ENCODE measurements at regions of chr11 and their contacts with region 1.

Region 1: DNA sequence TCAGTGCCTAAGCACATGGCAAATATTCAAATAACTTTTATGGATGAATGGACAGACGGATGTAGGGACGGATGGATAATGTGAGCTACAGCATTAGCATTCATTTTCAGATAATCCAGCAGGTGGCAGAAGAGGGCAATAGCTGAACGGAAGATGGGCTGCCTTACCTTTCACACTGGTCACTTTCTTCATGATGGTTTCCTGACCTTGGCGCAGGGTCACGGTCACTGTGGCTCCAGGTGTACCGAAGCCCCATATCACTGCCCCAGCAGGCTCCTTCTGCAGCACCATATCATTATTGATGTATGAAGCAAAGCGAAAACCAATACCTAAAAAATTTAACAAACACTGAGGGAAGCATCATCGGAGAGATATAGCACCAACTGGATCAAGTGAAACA is 4.3 kb downstream of the SIAE start:
- DNase-seq: peak; percentile 68

Region 2: DNA sequence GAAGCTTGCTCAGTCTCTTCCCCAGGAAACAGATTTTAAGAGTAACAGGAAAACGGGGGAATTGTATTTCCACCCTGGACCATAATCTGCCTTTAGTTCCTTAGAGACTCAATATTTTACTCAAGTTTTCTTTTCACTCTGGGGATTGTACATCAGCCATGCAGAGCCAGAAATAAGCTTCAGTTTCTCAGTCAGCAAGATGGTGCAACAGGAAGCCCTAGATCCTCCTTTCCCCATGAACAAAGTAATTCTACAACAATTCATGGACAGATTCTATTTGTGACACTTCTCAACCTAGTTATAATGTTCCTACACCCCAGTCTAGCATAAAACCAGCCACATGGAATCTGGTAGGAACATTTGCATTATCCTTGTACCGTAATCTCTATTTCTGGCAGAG is 309.6 kb before region 1 on chr11:
- CTCF ChIA-PET with region 1: no interaction called
- POLR2A ChIA-PET with region 1: no interaction called
- DNase-seq: no peak

Region 3: DNA sequence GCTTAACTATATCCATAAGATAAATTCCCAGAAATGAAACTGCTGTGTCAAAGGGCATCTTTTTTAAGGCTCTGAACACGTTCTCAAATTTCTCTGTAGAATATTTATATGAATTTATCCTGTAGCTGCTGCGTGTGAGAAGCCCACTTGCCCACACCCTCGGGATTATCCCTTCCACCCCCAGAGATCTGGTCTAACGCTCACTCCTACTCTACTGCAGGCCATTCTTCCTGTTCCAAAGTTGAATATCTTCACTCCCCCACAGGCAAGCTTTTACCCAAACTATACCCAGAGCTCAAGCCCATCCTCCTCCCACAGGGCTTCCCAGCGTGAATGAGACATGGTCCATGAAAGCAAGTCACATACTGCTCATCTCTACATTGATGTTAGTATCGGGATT is 20.6 kb before region 1 on chr11:
- CTCF ChIA-PET with region 1: no interaction called
- POLR2A ChIA-PET with region 1: no interaction called
- DNase-seq: no peak

Region 4: GRCh38 chr11:124658986-124659385 is 10.2 kb before region 1 on chr11:
- CTCF ChIA-PET with region 1: interaction called, 10 read pairs
- POLR2A ChIA-PET with region 1: interaction called, 8 read pairs
- DNase-seq: no peak

Region 5: DNA sequence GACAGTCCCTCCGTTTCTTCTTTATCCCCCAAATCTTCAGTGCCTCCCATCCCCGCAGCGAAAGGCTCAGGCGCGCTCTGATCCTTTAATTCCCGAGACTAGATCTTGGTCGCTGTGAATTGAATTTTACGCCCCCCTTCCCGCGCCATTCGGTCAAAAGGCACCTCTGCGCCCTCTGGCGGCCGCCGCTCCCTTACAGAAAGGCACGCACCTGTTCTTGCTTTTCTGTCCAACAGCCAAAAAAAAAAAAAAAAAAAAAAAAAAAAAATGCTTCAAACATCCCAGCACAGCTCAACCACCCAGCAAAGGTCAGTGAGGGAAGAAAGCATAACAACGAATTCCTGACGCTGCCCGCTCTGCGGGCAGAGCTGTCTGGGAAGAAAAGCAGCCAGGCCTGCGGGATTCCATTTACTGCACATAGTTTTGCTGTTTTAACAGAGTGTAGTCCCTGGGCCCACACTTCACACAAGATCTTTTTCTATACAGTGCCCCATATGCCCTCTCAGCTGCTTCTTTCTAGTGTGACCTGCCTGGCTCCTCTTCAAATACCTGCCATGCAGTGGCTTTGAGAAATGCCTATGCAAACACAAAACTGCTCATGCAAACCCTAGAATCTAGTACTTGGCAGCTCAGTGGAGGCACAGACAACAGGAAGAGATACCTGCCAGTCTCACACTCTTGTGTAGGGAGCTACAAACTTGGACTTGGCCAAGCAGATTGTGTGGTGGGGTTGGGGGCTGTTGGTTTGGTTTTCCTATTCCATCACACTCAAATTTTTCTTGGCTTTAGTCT is 94.2 kb after region 1 on chr11:
- CTCF ChIA-PET with region 1: interaction called, 11 read pairs
- POLR2A ChIA-PET with region 1: interaction called, 4 read pairs
- DNase-seq: peak; percentile 78

Region 6: DNA sequence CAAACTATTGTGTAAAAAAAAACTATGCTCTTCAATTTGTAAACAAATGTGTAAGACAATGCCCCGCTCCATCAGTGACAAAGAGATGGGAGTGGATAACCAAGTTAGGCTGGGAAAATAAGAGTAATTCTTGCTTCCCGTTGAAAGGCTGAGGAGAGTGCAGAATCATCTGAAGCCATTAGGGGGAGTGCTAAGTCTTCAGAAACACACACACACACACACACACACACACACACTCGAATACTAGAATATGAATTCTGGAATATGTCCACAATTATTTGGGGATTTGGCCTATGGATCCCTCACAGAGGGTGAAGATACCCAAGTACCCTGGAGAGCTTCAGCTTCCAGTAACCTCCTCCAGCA is 168.3 kb after region 1 on chr11:
- CTCF ChIA-PET with region 1: interaction called, 21 read pairs
- POLR2A ChIA-PET with region 1: interaction called, 3 read pairs
- DNase-seq: peak; percentile 54

Measured in HEK293T (cell line).